ENCODE measurements at regions of chr17 and their contacts with region 1.

Region 1: GRCh38 chr17:30378824-30379302 is at the start of gene CPD:
- DNase-seq: peak; percentile 100
- H3K4me3 Mint-ChIP-seq: peak within 1 kb of the TSS; percentile 84
- H3K27ac Mint-ChIP-seq: peak within 1 kb of the TSS; percentile 90
- H3K4me1 Mint-ChIP-seq: peaks cover 51% of the 10 kb centered on the region
- H3K27me3 Mint-ChIP-seq: no peaks in the 10 kb centered on the region
- total RNA-seq, gene CPD: 26.6 and 33.4 TPM in 2 replicates

Region 2: GRCh38 chr17:30363715-30364202 is 15.1 kb before region 1 on chr17:
- intact Hi-C with region 1: loop called (anchors 1 kb)
- DNase-seq: peak; percentile 92
- H3K4me3 Mint-ChIP-seq: peak overlapping the region; percentile 36
- H3K27ac Mint-ChIP-seq: peak overlapping the region; percentile 89
- H3K4me1 Mint-ChIP-seq: peaks cover 26% of the 10 kb centered on the region
- H3K27me3 Mint-ChIP-seq: peaks cover 3% of the 10 kb centered on the region

Region 3: GRCh38 chr17:30413109-30413508 is 34.2 kb after region 1 on chr17:
- intact Hi-C with region 1: loop called (anchors 5 kb)
- DNase-seq: no peak
- H3K4me3 Mint-ChIP-seq: peak overlapping the region; percentile 4
- H3K27ac Mint-ChIP-seq: peak overlapping the region; percentile 69
- H3K4me1 Mint-ChIP-seq: peaks cover 24% of the 10 kb centered on the region
- H3K27me3 Mint-ChIP-seq: no peaks in the 10 kb centered on the region

Region 4: DNA sequence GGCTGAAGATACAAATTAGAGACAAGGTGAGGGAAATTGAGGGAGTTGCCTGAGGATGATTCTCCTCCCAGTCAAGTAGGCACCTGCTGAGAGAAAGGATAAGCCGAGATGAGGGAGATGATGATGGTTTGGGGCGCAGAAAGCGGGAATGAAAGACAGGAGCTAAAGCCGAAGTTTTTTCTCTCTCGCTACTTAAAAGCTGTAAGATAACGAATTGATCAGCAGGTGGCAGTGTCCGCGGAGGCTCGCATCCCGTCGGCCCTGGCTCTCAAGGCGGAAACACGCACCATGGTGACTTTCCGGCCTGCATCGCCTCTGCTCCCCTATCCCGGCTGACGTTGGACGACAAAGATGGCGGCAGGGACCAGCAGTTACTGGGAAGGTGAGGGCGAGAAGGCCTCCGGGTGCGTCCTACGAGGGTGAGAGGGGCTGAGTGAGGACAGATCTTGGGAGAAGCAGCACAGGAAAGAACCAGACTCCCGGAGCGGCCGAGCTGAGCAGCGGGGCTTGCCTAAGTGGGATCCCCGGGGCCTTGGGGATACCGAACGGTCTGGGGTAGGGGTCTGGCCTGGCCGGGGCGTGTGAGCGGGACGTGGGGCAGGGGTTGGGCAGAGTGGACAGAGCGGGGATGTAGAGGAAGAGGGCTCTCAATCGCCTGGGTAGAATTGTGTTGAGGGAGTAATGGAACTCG is 98.4 kb after region 1 on chr17 and contains the start of gene GOSR1:
- intact Hi-C with region 1: loop called (anchors 5 kb)
- DNase-seq: peak; percentile 97
- H3K4me3 Mint-ChIP-seq: peak within 1 kb of the TSS; percentile 99
- H3K27ac Mint-ChIP-seq: peak within 1 kb of the TSS; percentile 94
- H3K4me1 Mint-ChIP-seq: peaks cover 29% of the 10 kb centered on the region
- H3K27me3 Mint-ChIP-seq: peaks cover 2% of the 10 kb centered on the region
- total RNA-seq, gene GOSR1: 54.8 and 55.6 TPM in 2 replicates

Region 5: DNA sequence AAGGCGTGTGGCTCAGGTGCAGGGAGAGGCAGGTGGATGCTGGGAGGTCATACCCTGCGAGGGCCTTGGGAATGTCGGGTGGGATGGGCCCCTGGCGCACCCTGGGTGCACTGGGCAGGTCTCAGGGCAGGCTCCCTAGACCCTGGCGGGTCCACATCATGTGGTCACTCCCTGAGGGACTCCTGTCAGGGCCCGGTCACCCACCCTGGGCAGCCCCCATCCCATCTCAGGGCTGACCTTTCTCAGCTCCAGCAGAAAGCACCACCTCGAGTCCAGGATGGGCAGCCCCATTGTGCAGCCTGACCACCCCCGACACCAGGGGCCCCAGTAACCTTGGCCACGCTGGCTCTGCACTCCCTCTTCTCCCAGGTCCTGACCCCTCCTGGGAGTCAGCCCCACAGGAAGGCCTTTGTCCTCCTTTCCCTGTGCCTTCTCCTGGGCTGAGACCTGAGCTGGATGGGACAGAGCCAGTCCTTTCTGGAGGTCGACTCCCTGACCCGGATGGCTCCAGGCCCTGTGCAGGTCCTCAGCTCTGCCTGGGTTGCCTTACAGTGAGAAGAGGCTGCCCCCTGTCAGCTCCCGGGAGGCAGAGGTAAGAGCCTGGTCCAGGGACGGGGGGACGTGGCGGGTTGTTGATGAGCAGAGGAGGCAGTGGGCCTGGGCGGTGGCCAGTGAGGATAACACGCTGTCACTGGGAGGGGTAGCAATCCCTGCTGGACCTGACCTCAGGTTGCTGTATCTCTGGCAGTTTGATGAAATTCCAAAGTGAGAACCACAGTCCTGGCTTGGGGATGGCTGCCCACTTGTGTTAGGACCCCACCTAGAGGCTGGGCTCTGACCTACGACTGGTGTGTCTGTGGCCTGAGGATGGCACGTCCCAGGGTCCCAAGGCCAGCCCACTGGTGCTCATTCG is 176.2 kb after region 1 on chr17:
- intact Hi-C with region 1: no loop called
- DNase-seq: no peak
- H3K4me3 Mint-ChIP-seq: no peak overlapping the region
- H3K27ac Mint-ChIP-seq: no peak overlapping the region
- H3K4me1 Mint-ChIP-seq: peaks cover 8% of the 10 kb centered on the region
- H3K27me3 Mint-ChIP-seq: no peaks in the 10 kb centered on the region